PC-3 (cell line): ENCODE measurements at regions of chr12 and their contacts with region 1.

Region 1: DNA sequence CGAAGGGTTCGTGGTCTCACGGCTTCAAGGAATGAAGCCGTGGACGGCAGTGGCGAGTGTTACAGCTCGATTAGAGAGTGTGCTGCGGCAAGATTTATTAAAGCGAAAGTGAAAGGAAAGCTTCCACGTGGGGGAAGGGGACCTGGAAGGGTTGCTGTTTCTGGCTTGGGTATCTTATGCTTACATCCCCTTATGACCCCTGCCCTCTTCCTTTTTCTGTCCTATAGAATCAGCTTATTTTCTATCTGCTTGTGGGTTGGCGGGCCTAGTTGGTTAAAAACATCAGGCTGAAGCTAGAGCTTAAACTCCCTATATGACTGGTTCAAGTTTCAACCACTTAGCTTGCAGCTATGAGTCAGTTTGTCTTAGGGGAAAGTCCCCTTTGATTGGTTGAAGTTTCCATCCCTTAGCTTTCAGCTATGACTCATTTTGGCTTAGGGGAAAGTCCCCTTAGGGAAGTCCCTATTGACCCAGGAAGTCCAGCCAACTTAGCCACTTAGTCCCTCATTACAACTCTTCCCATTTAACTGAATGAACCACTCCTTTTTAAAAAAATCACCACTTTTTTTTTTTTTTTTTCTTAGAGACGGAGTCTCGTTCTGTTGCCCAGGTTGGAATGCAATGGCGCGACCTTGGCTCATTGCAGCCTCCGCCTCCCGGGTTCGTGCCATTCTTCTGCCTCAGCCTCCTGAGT is 1494.7 kb upstream of the TMEM132C start:
- DNase-seq: peak; percentile 97
- ATAC-seq: peak; percentile 87
- H3K4me3 ChIP-seq: peak overlapping the region; percentile 81
- H3K27ac ChIP-seq: peak overlapping the region; percentile 83
- H3K4me1 ChIP-seq: 0 out of 2 replicates have a peak, but pooled peaks cover 7% of the 10 kb centered on the region
- H3K27me3 ChIP-seq: no peaks in the 10 kb centered on the region
- CTCF ChIP-seq: no peak

Region 2: DNA sequence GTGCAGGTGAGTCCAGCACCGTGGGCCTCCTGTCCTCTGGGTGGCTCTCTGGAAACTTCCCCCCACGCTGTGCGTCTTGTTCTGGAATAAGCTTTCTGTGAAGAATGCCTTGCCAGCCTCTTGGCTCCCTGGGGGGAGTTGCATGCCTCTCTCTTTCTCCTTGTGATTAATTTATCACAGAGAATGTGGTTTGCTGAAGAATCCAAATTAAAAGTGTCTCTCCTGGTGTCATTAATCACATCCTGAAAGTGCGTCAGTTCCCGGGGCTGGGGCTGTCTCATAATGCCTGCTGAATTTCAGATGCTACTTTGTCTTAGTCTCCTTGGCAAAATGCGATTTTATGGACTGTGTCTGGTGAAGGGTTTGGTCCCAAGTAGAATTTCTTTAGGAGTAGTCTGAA is 706.9 kb after region 1 on chr12:
- CTCF ChIA-PET with region 1: no interaction called
- POLR2A ChIA-PET with region 1: no interaction called
- intact Hi-C with region 1: loop called (anchors 10 kb)
- DNase-seq: no peak
- ATAC-seq: no peak
- H3K4me3 ChIP-seq: no peak overlapping the region
- H3K27ac ChIP-seq: no peak overlapping the region
- H3K4me1 ChIP-seq: no peaks in the 10 kb centered on the region
- H3K27me3 ChIP-seq: no peaks in the 10 kb centered on the region
- CTCF ChIP-seq: no peak